ENCODE measurements at regions of chr16 and their contacts with region 1.

Region 1: GRCh38 chr16:89720813-89721545 is at the starts of genes VPS9D1 and ZNF276:
- DNase-seq: peak; percentile 81
- ATAC-seq: peak; percentile 74
- H3K4me3 Mint-ChIP-seq: peak within 1 kb of the TSS; percentile 85
- H3K27ac Mint-ChIP-seq: peak within 1 kb of the TSS; percentile 85
- H3K4me1 Mint-ChIP-seq: peaks cover 35% of the 10 kb centered on the region
- H3K27me3 Mint-ChIP-seq: no peaks in the 10 kb centered on the region
- CTCF ChIP-seq: no peak
- total RNA-seq, gene VPS9D1: 6.6 and 7.4 TPM in 2 replicates
- total RNA-seq, gene ZNF276: 43.8 and 52.0 TPM in 2 replicates

Region 2: GRCh38 chr16:88406096-88407041 is 1314.6 kb before region 1 on chr16:
- CTCF ChIA-PET with region 1: no interaction called
- POLR2A ChIA-PET with region 1: no interaction called
- intact Hi-C with region 1: no loop called
- DNase-seq: no peak
- ATAC-seq: no peak
- H3K4me3 Mint-ChIP-seq: no peak overlapping the region
- H3K27ac Mint-ChIP-seq: no peak overlapping the region
- H3K4me1 Mint-ChIP-seq: peaks cover 4% of the 10 kb centered on the region
- H3K27me3 Mint-ChIP-seq: peaks cover 4% of the 10 kb centered on the region
- CTCF ChIP-seq: no peak

Region 3: DNA sequence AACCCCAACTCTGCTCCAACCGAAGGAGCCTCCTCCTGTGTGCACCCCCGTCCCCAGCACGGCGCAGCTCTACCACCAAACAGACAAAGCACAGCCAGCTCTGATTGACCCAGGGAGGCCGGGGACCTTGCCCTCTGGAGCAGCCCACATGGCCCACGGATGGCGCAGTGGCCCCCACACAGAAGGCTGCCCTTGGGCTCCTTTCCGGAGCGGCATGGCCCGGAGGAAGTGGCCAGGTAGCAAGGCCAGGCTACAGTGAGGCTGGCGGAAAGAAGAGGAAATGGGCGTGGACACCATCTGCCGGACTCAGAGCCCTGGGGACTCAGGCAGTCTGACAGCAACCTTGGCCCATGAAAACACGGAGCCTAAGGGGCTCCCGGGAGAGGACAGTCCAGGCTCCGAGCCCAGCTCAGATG is 1170.7 kb before region 1 on chr16:
- CTCF ChIA-PET with region 1: no interaction called
- POLR2A ChIA-PET with region 1: no interaction called
- intact Hi-C with region 1: no loop called
- DNase-seq: no peak
- ATAC-seq: no peak
- H3K4me3 Mint-ChIP-seq: no peak overlapping the region
- H3K27ac Mint-ChIP-seq: no peak overlapping the region
- H3K4me1 Mint-ChIP-seq: peaks cover 10% of the 10 kb centered on the region
- H3K27me3 Mint-ChIP-seq: peaks cover 7% of the 10 kb centered on the region
- CTCF ChIP-seq: no peak

Region 4: GRCh38 chr16:89115216-89115861 is 605.6 kb before region 1 on chr16:
- CTCF ChIA-PET with region 1: no interaction called
- POLR2A ChIA-PET with region 1: no interaction called
- intact Hi-C with region 1: no loop called
- DNase-seq: peak; percentile 64
- ATAC-seq: peak; percentile 84
- H3K4me3 Mint-ChIP-seq: peak overlapping the region; percentile 78
- H3K27ac Mint-ChIP-seq: peak overlapping the region; percentile 95
- H3K4me1 Mint-ChIP-seq: peaks cover 9% of the 10 kb centered on the region
- H3K27me3 Mint-ChIP-seq: no peaks in the 10 kb centered on the region
- CTCF ChIP-seq: no peak

Region 5: GRCh38 chr16:89686520-89687091 is 34.4 kb before region 1 on chr16 and contains the start of gene CDK10:
- CTCF ChIA-PET with region 1: no interaction called
- POLR2A ChIA-PET with region 1: no interaction called
- intact Hi-C with region 1: loop called (anchors 1 kb)
- DNase-seq: peak; percentile 98
- ATAC-seq: peak; percentile 91
- H3K4me3 Mint-ChIP-seq: peak within 1 kb of the TSS; percentile 93
- H3K27ac Mint-ChIP-seq: peak within 1 kb of the TSS; percentile 90
- H3K4me1 Mint-ChIP-seq: peaks cover 18% of the 10 kb centered on the region
- H3K27me3 Mint-ChIP-seq: no peaks in the 10 kb centered on the region
- CTCF ChIP-seq: no peak
- total RNA-seq, gene CDK10: 67.9 and 76.1 TPM in 2 replicates

Region 6: DNA sequence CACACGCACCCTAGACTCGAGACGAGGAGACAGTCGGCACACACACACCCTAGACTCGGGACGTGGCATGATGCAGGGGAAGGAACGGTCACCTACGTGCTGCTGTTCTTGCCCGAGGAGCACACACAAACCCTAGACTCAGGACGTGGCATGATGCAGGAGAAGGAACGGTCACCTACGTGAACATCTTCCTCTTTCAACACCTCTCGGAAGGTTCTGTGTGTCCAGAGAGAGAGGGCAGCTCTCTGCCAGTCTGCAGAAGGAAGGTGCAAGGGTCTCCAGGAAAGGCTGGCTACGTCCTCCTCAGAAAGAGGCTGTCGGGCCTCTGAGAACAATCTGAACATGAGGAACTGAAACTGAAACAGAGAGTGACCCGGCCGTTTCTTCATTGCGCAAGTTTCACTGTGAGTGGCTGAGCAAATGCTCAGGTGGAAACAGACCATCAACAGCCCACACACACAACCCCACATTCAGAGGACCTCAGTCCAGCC is 43.8 kb after region 1 on chr16:
- CTCF ChIA-PET with region 1: no interaction called
- POLR2A ChIA-PET with region 1: no interaction called
- intact Hi-C with region 1: loop called (anchors 1 kb)
- DNase-seq: peak; percentile 62
- ATAC-seq: peak; percentile 83
- H3K4me3 Mint-ChIP-seq: peak overlapping the region; percentile 88
- H3K27ac Mint-ChIP-seq: peak overlapping the region; percentile 95
- H3K4me1 Mint-ChIP-seq: peaks cover 69% of the 10 kb centered on the region
- H3K27me3 Mint-ChIP-seq: no peaks in the 10 kb centered on the region
- CTCF ChIP-seq: no peak